IMR-90 (cell line): ENCODE measurements at regions of chr2 and their contacts with region 1.

Region 1: DNA sequence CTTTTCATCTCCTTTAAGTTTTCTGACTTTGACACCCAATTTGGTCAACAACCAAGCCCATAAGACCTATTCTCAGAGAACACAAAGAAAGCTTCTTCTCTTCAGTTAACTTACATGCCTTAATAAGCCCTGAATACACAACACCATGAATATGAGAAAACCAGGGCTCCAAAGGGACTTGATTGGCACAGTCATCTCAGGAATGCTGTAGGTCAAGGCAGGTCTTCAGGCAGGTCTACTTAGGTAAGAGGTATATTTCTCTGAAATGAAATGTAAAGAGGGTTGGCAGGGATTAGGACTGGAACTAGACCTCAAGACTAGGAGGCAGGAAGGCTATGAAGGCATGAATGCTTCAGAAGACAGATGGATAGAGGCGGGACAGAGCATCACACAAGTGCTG is 24.4 kb upstream of the EIF2AK3 start:
- DNase-seq: no peak
- ATAC-seq: no peak
- H3K4me3 ChIP-seq: no peak overlapping the region
- H3K27ac ChIP-seq: no peak overlapping the region
- H3K4me1 ChIP-seq: 0 out of 2 replicates have a peak, but pooled peaks cover 2% of the 10 kb centered on the region
- H3K27me3 ChIP-seq: no peaks in the 10 kb centered on the region
- CTCF ChIP-seq: no peak
- POLR2A ChIP-seq: no peak
- RAD21 ChIP-seq: no peak

Region 2: GRCh38 chr2:88614497-88615157 is 37.0 kb before region 1 on chr2:
- CTCF ChIA-PET with region 1: no interaction called
- POLR2A ChIA-PET with region 1: interaction called, 10 read pairs
- dilution Hi-C with region 1: no loop called
- in situ Hi-C with region 1: no loop called
- intact Hi-C with region 1: no loop called
- DNase-seq: no peak
- ATAC-seq: no peak
- H3K4me3 ChIP-seq: no peak overlapping the region
- H3K27ac ChIP-seq: no peak overlapping the region
- H3K4me1 ChIP-seq: peaks cover 10% of the 10 kb centered on the region; the same call in 1 of the 2 replicates
- H3K27me3 ChIP-seq: no peaks in the 10 kb centered on the region
- CTCF ChIP-seq: no peak
- POLR2A ChIP-seq: no peak
- RAD21 ChIP-seq: no peak

Region 3: DNA sequence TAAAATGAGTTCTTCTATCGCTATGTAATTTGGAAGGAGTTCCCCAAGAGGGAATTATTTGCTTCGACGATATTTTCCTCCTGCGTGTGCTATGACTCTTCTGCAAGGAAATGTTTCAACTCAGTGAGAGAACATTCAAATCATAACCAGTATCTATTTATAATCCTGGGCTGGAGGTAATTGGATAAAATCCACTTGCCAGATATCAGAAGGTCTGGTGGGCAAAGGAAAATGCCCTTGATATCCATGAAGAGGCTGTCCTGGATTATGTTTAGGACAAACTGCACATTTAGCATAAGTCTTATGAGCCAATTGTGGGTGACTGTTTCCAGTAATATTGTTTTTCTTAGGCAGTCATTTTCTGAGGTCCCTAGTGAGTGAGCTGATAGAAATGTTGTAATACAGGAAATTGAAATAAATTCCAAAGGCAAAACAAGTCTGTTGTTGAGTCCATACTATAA is 57.6 kb after region 1 on chr2:
- CTCF ChIA-PET with region 1: no interaction called
- POLR2A ChIA-PET with region 1: no interaction called
- dilution Hi-C with region 1: no loop called
- in situ Hi-C with region 1: no loop called
- intact Hi-C with region 1: no loop called
- DNase-seq: peak; percentile 42
- ATAC-seq: peak; percentile 63
- H3K4me3 ChIP-seq: no peak overlapping the region
- H3K27ac ChIP-seq: no peak overlapping the region
- H3K4me1 ChIP-seq: no peaks in the 10 kb centered on the region; the same call in 1 of the 2 replicates
- H3K27me3 ChIP-seq: no peaks in the 10 kb centered on the region
- CTCF ChIP-seq: no peak
- POLR2A ChIP-seq: no peak
- RAD21 ChIP-seq: no peak